ENCODE measurements at regions of chr2 and their contacts with region 1.

Region 1: GRCh38 chr2:198268519-198268918 is 464.1 kb downstream of the PLCL1 start:
- DNase-seq: no peak
- H3K4me3 ChIP-seq: no peak overlapping the region
- H3K27ac ChIP-seq: no peak overlapping the region
- H3K4me1 ChIP-seq: no peaks in the 10 kb centered on the region
- H3K27me3 ChIP-seq: no peaks in the 10 kb centered on the region
- CTCF ChIP-seq: no peak
- POLR2A ChIP-seq: no peak

Region 2: DNA sequence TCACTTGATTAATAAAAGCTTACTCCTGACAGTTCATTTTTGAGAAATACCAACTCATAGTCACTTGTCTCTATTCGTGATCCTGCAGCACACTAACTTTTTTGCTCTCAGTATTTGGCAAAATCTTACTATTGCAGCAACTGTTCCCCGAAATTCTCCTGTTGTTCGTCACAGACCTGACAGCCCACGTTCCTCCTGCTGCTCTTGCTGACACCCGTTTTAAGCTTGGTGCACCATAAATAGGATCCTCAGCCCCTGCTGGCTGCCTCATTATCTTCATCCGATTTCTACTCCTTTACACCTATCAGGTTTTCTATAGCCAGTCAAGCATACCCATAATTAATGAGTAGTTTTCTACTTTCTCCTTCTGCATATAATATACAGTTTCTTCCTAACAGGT is 95.3 kb before region 1 on chr2:
- CTCF ChIA-PET with region 1: no interaction called
- POLR2A ChIA-PET with region 1: no interaction called
- dilution Hi-C with region 1: no loop called
- intact Hi-C with region 1: no loop called
- DNase-seq: no peak
- H3K4me3 ChIP-seq: no peak overlapping the region
- H3K27ac ChIP-seq: no peak overlapping the region
- H3K4me1 ChIP-seq: no peaks in the 10 kb centered on the region
- H3K27me3 ChIP-seq: no peaks in the 10 kb centered on the region
- CTCF ChIP-seq: no peak
- POLR2A ChIP-seq: no peak

Region 3: DNA sequence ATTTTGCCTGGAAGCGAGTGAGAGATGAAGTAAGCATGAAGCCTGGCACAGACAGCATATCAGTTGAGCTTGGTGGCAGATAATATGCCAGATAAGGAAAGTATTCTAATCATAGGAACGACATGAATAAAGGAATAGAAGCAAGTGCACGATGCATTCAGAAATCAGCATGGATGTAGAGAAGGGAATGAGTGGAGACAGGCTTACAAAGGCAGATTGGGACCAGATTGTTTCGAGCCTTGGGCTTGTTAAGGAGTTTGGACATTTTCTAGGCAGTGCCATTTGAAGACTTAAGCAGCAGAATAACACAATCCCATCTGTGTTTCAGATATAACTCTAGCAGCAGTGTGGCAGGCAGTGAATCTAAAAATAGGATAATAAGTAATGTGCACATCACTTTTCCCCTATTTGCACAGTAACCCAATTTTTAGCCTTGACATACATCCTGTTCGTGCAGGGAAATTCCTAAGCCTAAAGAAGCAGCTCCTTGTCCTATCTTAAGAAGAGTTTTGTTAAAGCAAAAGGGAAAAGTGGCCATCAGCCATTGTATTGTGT is 13.9 kb before region 1 on chr2:
- CTCF ChIA-PET with region 1: no interaction called
- POLR2A ChIA-PET with region 1: no interaction called
- dilution Hi-C with region 1: no loop called
- intact Hi-C with region 1: loop called (anchors 1 kb)
- DNase-seq: no peak
- H3K4me3 ChIP-seq: no peak overlapping the region
- H3K27ac ChIP-seq: no peak overlapping the region
- H3K4me1 ChIP-seq: no peaks in the 10 kb centered on the region
- H3K27me3 ChIP-seq: peaks cover 0 to 2% of the 10 kb centered on the region in 2 experiments
- CTCF ChIP-seq: no peak
- POLR2A ChIP-seq: no peak

Measured in endothelial cell of umbilical vein (primary cell).